Activated CD8-positive, alpha-beta memory T cell treated with anti-CD3 and anti-CD28 coated beads, Interleukin-2, amount 10 ng/mL, durations not matched to agents 7 days and 5 days (primary cell): ENCODE measurements at regions of chr15 and their contacts with region 1.

Region 1: DNA sequence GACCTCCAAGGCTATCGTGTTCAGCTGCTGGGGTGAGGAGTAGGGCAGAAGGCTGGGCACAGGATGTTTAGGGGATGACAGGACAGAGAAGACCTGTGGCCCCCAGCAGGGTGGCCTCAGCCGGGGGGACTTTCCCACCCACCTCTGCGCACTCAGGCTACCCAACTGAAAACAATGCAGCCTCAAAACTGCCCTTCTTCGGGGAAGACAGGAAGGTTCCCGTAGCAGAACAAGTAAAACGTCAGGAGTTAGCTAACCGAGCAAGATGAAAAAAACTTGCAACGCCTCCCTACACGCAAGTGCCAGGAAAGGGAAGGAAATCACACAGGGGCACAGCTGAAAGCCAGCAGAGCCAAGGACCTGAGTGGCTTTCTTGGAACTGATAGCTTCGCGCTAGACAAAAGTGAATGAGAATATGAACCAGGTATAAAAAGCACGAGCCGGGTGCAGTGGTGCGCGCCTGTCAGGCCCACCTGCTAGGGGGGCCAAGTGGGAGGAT is 38.4 kb upstream of the FURIN start:
- DNase-seq: peak; percentile 88
- ATAC-seq: peak; percentile 85
- H3K4me3 Mint-ChIP-seq: peak overlapping the region; percentile 23
- H3K27ac Mint-ChIP-seq: peak overlapping the region; percentile 93
- H3K4me1 Mint-ChIP-seq: peaks cover 82% of the 10 kb centered on the region
- H3K27me3 Mint-ChIP-seq: no peaks in the 10 kb centered on the region

Region 2: DNA sequence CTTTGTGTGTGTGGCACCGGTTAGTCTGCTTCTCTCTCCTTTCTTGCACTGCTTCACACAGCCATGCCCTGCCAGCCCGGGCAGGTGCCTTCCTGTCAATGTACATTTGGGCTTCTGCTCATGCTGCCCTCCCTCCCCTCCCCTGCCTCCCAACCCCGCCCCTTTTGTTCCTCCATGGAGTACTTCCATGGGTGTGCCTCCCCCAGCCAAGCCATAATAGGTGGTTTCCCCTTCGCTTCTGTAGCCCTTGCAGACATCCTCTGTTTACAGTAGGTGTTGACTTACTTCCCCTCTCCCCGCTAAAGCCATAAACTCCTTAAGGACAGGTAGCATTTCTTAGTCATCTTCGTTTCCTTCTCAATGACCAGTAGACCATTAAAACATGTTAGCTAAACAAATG is 332.1 kb before region 1 on chr15:
- CTCF ChIA-PET with region 1: no interaction called
- DNase-seq: no peak
- ATAC-seq: no peak
- H3K4me3 Mint-ChIP-seq: no peak overlapping the region
- H3K27ac Mint-ChIP-seq: no peak overlapping the region
- H3K4me1 Mint-ChIP-seq: peaks cover 5% of the 10 kb centered on the region
- H3K27me3 Mint-ChIP-seq: no peaks in the 10 kb centered on the region

Region 3: DNA sequence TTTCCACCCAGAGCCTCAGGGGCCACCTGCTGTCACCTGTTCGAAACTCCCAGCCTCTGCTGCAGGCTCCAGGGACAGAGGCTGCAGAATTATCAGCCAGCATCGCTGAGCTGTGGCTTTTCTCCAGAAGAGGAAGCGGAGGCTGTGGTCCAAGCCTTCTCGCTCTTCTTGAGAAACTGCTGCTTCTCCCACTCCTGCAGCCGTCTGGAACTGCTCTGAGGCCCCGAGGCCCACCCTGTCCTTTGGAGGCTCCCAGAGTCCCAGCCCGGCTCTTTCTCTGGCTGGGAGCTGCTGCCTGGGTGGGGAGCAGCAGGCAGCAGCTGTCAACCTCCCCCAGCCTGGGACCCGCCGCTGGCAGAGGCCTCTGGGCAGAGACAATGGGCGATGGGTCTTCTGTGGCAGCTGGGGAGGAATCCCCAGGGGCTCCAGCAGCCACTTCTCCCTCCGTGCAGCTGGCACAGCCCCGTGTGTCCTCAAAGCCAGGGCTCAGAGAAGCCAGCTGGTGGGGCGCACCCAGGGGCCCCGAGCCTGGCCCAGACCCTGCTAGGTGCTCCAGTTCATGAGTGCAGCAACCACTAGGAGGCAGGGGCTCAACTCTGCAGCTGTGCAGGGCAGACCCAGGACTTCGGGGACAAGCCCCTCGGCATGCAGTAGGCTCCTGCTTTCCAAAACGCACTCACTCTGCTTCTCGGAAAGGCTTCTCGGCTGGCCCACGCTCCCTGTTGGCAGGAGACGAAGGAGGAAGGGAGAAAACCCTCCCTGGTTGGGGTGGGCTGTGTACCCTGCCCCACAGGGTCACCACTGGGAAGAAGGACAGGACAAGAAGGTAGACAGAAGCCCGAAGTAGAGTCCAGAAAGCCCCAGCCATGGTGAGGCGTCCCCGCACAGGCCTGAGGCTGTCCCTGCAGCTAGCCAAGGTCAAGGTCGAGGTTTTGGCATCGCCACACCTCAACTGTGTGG is 11.5 kb before region 1 on chr15:
- CTCF ChIA-PET with region 1: interaction called, 19 read pairs
- DNase-seq: peak; percentile 65
- ATAC-seq: peak; percentile 23
- H3K4me3 Mint-ChIP-seq: peak overlapping the region; percentile 8
- H3K27ac Mint-ChIP-seq: peak overlapping the region; percentile 96
- H3K4me1 Mint-ChIP-seq: peaks cover 83% of the 10 kb centered on the region
- H3K27me3 Mint-ChIP-seq: no peaks in the 10 kb centered on the region

Region 4: GRCh38 chr15:90864507-90864906 is 34.5 kb after region 1 on chr15:
- CTCF ChIA-PET with region 1: no interaction called
- DNase-seq: no peak
- ATAC-seq: no peak
- H3K4me3 Mint-ChIP-seq: no peak overlapping the region
- H3K27ac Mint-ChIP-seq: no peak overlapping the region
- H3K4me1 Mint-ChIP-seq: peaks cover 61% of the 10 kb centered on the region
- H3K27me3 Mint-ChIP-seq: no peaks in the 10 kb centered on the region